ENCODE measurements at regions of chr15 and their contacts with region 1.

Region 1: GRCh38 chr15:67254238-67255175 is at the starts of genes AAGAB and IQCH:
- DNase-seq: peak; percentile 86 to 98 (median 96)
- ATAC-seq: peak; percentile 88
- H3K4me3 ChIP-seq: peak within 1 kb of the TSS; percentile 96
- H3K4me3 Mint-ChIP-seq: peak within 1 kb of the TSS; percentile 97
- H3K27ac ChIP-seq: peak within 1 kb of the TSS; percentile 72 to 82
- H3K27ac Mint-ChIP-seq: peak within 1 kb of the TSS; percentile 91
- H3K4me1 ChIP-seq: peaks cover 17% of the 10 kb centered on the region
- H3K4me1 Mint-ChIP-seq: peaks cover 43% of the 10 kb centered on the region
- H3K27me3 ChIP-seq: no peaks in the 10 kb centered on the region
- H3K27me3 Mint-ChIP-seq: no peaks in the 10 kb centered on the region
- CTCF ChIP-seq: no peak
- total RNA-seq, gene AAGAB: 14.2 to 15.6 TPM
- total RNA-seq, gene IQCH: 0.85 to 1.3 TPM

Region 2: DNA sequence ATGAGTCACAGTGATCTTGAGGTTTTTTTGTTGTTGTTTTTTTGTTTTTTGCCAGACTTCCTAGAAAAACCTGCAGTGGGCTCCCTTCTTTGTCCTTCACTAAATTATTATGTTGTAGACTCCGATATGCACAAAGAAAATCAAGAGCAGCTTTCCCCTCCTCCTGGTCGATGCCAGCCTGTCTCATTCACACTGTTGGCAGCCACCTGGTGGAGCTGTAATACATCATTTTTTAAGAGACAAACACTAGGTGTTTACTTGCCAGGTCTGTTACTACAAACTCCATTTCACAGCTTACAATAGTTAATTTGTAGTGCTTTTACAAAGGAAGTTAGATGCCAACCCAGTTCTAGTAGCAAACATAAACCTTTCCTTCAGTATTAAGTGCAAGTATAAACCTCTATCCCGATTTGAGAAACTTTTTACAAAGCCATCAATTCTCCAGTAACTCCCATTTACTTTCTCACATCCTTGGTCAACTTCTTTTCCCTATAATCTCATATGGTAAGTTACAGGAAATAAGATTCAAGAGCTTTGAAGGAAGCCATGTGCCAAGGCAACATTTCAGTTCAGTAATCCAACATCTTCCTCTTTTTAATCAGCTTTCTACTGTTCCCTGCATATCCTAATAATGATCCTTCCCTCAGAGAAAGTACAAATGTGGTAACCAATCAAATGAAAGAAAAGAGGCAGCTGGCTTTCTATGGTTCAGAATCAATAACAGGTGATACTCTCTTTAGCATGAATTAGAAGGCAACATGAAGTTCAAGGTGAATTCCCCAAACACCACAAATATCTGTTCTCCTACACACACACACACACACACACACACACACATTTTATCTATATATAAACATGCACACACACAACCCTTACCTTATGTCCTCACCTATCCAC is 14.0 kb before region 1 on chr15:
- CTCF ChIA-PET with region 1: interaction called, 12 read pairs
- POLR2A ChIA-PET with region 1: interaction called, 13 read pairs
- intact Hi-C with region 1: loop called in 1 of 2 experiments (anchors 2 kb)
- DNase-seq: peak in 10 of 14 experiments; percentile 7 to 68 (median 26)
- ATAC-seq: peak; percentile 84
- H3K4me3 ChIP-seq: no peak overlapping the region
- H3K4me3 Mint-ChIP-seq: peak overlapping the region; percentile 16
- H3K27ac ChIP-seq: peak overlapping the region in 1 of 2 donors; percentile 63
- H3K27ac Mint-ChIP-seq: peak overlapping the region; percentile 66
- H3K4me1 ChIP-seq: peaks cover 28% of the 10 kb centered on the region
- H3K4me1 Mint-ChIP-seq: peaks cover 61% of the 10 kb centered on the region
- H3K27me3 ChIP-seq: no peaks in the 10 kb centered on the region
- H3K27me3 Mint-ChIP-seq: no peaks in the 10 kb centered on the region
- CTCF ChIP-seq: peak; percentile 52

Region 3: DNA sequence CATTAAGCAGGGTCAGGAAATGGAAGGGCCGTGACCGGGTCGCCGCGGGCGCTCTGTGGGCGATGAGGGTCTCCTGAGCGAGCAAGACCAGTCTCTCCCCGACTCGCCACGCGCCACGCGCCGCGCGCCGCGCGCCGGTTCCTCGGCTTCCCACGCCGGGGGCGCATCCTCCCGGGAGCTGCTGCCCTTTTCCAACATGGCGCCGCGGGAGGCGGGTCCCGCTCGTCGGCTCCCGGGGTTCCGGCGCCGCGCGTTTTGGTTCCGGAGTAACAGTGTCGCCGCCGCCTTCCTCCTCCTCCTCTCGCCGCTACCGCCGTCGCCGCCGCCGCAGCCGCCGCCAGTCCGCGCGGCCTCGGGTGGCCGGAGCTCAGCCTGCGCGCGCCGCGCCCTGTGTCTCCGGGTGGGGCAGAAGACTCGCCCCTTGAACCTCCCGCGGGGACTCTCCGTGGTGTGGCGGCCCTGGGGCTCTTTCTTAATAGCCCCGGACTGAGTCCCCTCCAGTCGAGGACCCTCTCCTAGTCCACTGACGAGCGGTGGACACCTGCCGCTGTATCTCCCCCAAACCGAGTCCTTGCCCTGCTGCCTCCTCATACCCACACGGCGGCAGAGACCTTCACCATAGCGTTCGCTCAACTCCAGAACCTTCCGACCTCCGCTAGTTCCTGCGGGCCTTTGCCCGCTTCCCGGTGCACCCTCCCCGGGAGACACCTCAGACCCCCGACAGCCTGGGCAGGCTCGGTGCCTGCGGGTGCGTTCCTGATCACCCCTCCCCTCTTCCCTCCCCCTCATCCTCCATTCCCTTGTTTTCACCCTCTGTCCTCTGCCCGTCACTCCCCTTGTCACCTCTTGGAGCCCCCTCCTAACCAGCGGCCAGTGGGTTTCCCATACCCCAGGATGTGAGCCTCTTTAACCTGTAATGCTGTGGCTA is 288.2 kb after region 1 on chr15 and contains the start of gene MAP2K5:
- CTCF ChIA-PET with region 1: no interaction called
- POLR2A ChIA-PET with region 1: no interaction called
- intact Hi-C with region 1: loop called in 1 of 2 experiments (anchors 10 kb)
- DNase-seq: peak; percentile 73 to 91 (median 81)
- ATAC-seq: peak; percentile 76
- H3K4me3 ChIP-seq: peak within 1 kb of the TSS; percentile 77
- H3K4me3 Mint-ChIP-seq: peak within 1 kb of the TSS; percentile 93
- H3K27ac ChIP-seq: peak within 1 kb of the TSS; percentile 74 to 78
- H3K27ac Mint-ChIP-seq: peak within 1 kb of the TSS; percentile 99
- H3K4me1 ChIP-seq: peaks cover 14% of the 10 kb centered on the region
- H3K4me1 Mint-ChIP-seq: peaks cover 58% of the 10 kb centered on the region
- H3K27me3 ChIP-seq: no peaks in the 10 kb centered on the region
- H3K27me3 Mint-ChIP-seq: no peaks in the 10 kb centered on the region
- CTCF ChIP-seq: no peak
- total RNA-seq, gene MAP2K5: 22.2 to 27.9 TPM

Region 4: DNA sequence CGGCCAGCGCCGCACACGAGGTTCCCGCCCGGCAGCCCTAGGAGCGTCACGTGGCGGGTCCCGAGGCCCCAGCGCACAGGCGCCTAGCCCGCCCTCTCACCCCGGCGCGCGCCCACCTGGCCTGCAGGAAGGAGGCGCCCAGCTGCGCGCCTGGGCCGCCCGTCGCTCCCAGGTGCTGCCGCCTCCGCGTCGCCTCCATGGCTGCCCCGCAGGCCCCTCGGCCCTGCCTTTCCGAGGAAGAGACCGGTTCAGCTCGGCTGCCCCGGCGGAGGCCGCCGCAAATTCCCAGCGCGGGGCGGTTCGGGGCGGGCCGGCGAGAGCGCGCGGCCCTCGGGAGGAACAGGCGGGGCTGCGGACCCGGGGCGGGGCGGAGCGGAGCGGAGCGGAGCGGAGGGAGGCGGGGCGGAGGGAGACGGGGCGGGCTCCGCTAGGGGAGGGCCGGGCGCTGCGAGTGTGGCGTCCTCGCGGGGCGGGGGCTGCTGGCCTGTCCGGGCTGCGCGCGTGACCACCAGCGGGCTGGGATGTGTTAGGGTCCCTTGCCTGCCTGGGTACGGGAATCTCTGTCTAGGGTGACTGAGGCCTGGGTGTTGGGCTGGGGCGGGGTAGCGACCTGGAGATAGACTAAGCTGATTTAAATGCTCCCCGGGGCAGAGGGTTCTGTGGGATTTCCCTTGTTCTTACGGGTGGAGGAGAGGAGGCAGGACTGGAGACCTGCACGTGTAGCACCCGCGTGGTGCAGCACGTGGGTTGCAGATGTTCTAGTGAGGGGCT is 975.1 kb after region 1 on chr15 and contains the start of gene CLN6:
- CTCF ChIA-PET with region 1: no interaction called
- POLR2A ChIA-PET with region 1: no interaction called
- intact Hi-C with region 1: loop called in 1 of 2 experiments (anchors 5 kb)
- DNase-seq: peak; percentile 57 to 93 (median 75)
- ATAC-seq: peak; percentile 82
- H3K4me3 ChIP-seq: peak within 1 kb of the TSS; percentile 88
- H3K4me3 Mint-ChIP-seq: peak within 1 kb of the TSS; percentile 92
- H3K27ac ChIP-seq: peak within 1 kb of the TSS in 1 of 2 donors; percentile 34
- H3K27ac Mint-ChIP-seq: peak within 1 kb of the TSS; percentile 73
- H3K4me1 ChIP-seq: peaks cover 29% of the 10 kb centered on the region
- H3K4me1 Mint-ChIP-seq: peaks cover 28% of the 10 kb centered on the region
- H3K27me3 ChIP-seq: no peaks in the 10 kb centered on the region
- H3K27me3 Mint-ChIP-seq: no peaks in the 10 kb centered on the region
- CTCF ChIP-seq: no peak
- total RNA-seq, gene CLN6: 8.0 to 8.1 TPM